Dendritic cell treated with granulocyte-macrophage colony-stimulating factor and Interleukin-4, amounts not matched to agents 40 ng/mL and 50 ng/mL, for 4 days (primary cell): ENCODE measurements at regions of chr4 and their contacts with region 1.

Region 1: DNA sequence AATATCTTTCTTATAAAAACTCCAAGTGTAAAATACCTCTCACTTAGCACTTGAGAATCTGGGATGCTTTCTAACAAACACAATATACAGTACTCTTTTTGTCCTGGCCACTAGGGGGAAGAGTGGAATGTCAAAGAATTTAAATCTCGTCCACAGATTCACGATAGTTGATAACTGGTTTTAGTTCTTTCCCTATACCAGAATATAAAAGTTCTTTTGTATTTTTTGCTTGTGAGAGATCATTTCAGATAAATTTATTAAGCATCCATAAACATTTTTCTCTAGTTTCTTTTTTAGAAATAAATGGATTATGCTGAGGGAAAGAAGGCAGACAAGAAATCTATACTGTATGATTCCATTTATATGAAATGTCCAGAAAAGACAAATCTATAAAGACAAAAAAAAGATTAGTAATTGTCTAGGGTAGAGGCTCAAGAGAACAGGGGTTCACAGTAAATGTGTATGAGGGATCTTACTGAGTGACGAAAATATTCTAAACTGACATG is 50.4 kb downstream of the MGARP start:
- H3K4me3 Mint-ChIP-seq: no peak overlapping the region
- H3K27ac Mint-ChIP-seq: no peak overlapping the region
- H3K4me1 Mint-ChIP-seq: peaks cover 5% of the 10 kb centered on the region
- H3K27me3 Mint-ChIP-seq: no peaks in the 10 kb centered on the region

Region 2: GRCh38 chr4:139188648-139189416 is 40.8 kb before region 1 on chr4:
- intact Hi-C with region 1: loop called (anchors 5 kb)
- H3K4me3 Mint-ChIP-seq: peak overlapping the region; percentile 46
- H3K27ac Mint-ChIP-seq: peak overlapping the region; percentile 69
- H3K4me1 Mint-ChIP-seq: peaks cover 37% of the 10 kb centered on the region
- H3K27me3 Mint-ChIP-seq: no peaks in the 10 kb centered on the region

Region 3: GRCh38 chr4:139295206-139295941 is 65.8 kb after region 1 on chr4:
- intact Hi-C with region 1: loop called (anchors 5 kb)
- H3K4me3 Mint-ChIP-seq: peak overlapping the region; percentile 88
- H3K27ac Mint-ChIP-seq: peak overlapping the region; percentile 97
- H3K4me1 Mint-ChIP-seq: peaks cover 11% of the 10 kb centered on the region
- H3K27me3 Mint-ChIP-seq: no peaks in the 10 kb centered on the region

Region 4: GRCh38 chr4:139509727-139510410 is 280.3 kb after region 1 on chr4:
- intact Hi-C with region 1: no loop called
- H3K4me3 Mint-ChIP-seq: no peak overlapping the region
- H3K27ac Mint-ChIP-seq: no peak overlapping the region
- H3K4me1 Mint-ChIP-seq: no peaks in the 10 kb centered on the region
- H3K27me3 Mint-ChIP-seq: no peaks in the 10 kb centered on the region